Adrenal gland (tissue), 19 donors: ENCODE measurements at regions of chr1 and their contacts with region 1.

Region 1: DNA sequence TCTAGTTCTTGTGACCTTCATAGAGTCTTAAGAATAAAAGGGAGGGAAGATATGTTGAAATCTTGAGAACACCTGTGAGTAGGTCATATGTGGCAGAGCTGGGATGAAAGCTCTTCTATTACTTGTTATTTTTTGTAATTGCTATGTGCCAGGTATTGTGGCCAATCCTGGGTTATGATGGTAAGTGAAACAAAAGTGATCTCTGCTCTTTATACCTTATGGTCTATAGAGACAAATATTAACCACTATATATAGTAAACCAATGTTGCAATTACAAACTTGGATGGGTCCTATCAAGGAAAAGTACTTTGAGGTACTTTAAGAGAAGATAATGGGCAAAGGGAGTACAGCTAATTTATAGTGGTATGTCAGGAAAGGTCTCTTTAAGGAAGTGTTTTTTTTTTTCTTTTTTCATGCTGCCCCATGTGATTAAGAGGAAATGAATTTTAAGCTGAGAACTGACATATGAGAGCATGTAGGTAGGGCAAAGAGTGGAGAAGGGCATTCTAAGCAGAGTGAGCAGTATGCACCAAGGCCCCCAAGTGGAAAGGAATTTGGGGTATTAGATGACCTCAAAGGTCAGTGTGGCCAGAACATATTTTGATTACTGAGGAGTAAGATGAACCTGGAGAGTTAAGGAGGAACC is 43.3 kb downstream of the POU2F1 start:
- DNase-seq: no peak
- H3K4me3 ChIP-seq: no peak overlapping the region
- H3K27ac ChIP-seq: no peak overlapping the region
- H3K4me1 ChIP-seq: peaks cover 5 to 51% of the 10 kb centered on the region in 2 donors
- H3K27me3 ChIP-seq: no peaks in the 10 kb centered on the region
- CTCF ChIP-seq: no peak
- POLR2A ChIP-seq: no peak

Region 2: GRCh38 chr1:167161242-167161641 is 102.7 kb before region 1 on chr1:
- intact Hi-C with region 1: no loop called
- DNase-seq: no peak
- H3K4me3 ChIP-seq: no peak overlapping the region
- H3K27ac ChIP-seq: no peak overlapping the region
- H3K4me1 ChIP-seq: no peaks in the 10 kb centered on the region
- H3K27me3 ChIP-seq: peaks cover 4% of the 10 kb centered on the region
- CTCF ChIP-seq: no peak
- POLR2A ChIP-seq: no peak

Region 3: DNA sequence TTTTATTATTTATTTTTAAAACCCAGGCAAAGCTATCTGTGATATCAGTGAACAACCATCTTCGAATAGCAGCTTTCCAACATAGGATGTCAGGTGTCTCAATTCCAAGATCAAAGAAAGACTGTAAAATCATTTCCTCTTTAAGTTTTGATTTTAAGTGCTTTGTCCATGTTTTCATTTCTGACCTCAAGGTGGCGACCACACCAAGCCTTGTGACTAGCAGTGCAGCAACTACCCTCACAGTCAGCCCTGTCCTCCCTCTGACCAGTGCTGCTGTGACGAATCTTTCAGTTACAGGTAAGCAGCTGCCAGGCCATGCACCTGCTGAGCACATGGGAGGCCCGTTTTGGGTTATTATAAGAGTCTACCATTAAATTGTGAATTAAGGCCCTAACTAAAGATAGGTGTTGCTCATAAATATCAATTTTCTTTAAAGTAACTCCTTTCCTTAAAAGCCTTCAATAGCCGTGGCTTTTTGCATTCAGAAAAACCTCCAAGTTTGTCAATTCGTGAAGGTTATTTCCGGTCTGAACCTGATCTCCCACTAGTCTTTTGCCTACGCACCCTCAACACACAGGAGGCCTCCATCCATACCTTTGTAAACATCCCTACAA is 137.4 kb after region 1 on chr1:
- intact Hi-C with region 1: loop called in 1 of 2 experiments (anchors 10 kb)
- DNase-seq: peak; percentile 51 to 82 (median 71)
- H3K4me3 ChIP-seq: no peak overlapping the region
- H3K27ac ChIP-seq: no peak overlapping the region
- H3K4me1 ChIP-seq: peaks cover 0 to 10% of the 10 kb centered on the region in 2 donors
- H3K27me3 ChIP-seq: no peaks in the 10 kb centered on the region
- CTCF ChIP-seq: peak; percentile 42 to 67 (median 58)
- POLR2A ChIP-seq: no peak